Stomach (tissue), 19 donors: ENCODE measurements at regions of chr19 and their contacts with region 1.

Region 1: DNA sequence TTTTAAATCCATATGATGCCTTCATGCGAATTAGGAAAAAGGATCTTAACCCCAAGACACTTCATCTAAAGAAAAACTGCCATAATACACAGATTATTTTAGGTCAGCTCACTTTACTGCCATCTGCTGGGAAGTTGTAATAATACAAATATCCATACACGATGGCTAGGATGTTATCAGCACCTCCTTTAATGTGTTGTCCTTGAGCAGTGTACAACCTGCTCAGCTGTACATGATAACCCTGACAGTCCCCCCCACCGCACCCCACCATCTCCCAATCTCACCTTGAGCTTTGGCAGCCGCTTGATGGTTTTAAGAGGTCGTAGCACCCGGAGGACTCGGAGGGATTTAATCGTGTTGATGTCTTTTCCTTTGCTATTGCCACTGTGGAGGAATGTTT is 112.2 kb downstream of the IER2 start:
- DNase-seq: peak in 1 of 2 donors; percentile 84
- H3K4me3 ChIP-seq: no peak overlapping the region
- H3K27ac ChIP-seq: no peak overlapping the region
- H3K4me1 ChIP-seq: peaks cover 0 to 13% (median 2%) of the 10 kb centered on the region in 4 donors
- H3K27me3 ChIP-seq: peaks cover 0 to 24% (median 0%) of the 10 kb centered on the region in 3 donors
- CTCF ChIP-seq: peak in 5 of 7 experiments; percentile 15 to 67 (median 34)
- EP300 ChIP-seq: no peak
- POLR2A ChIP-seq: no peak

Region 2: GRCh38 chr19:12974301-12975220 is 287.9 kb before region 1 on chr19:
- intact Hi-C with region 1: loop called (anchors 5 kb)
- DNase-seq: peak in 1 of 2 donors; percentile 33
- H3K4me3 ChIP-seq: no peak overlapping the region
- H3K27ac ChIP-seq: no peak overlapping the region
- H3K4me1 ChIP-seq: peaks cover 4 to 12% (median 7%) of the 10 kb centered on the region in 4 donors
- H3K27me3 ChIP-seq: peaks cover 0 to 5% (median 0%) of the 10 kb centered on the region in 3 donors
- CTCF ChIP-seq: no peak
- EP300 ChIP-seq: no peak
- POLR2A ChIP-seq: no peak